ENCODE measurements at regions of chr20 and their contacts with region 1.

Region 1: GRCh38 chr20:19205977-19206396 is 6.5 kb upstream of the SLC24A3 start:
- DNase-seq: peak in 8 of 9 donors; percentile 20 to 71 (median 41)
- ATAC-seq: peak; percentile 67
- H3K4me3 ChIP-seq: no peak overlapping the region
- H3K4me3 Mint-ChIP-seq: no peak overlapping the region
- H3K27ac ChIP-seq: no peak overlapping the region
- H3K27ac Mint-ChIP-seq: no peak overlapping the region
- H3K4me1 ChIP-seq: no peaks in the 10 kb centered on the region
- H3K4me1 Mint-ChIP-seq: no peaks in the 10 kb centered on the region
- H3K27me3 ChIP-seq: no peaks in the 10 kb centered on the region
- H3K27me3 Mint-ChIP-seq: peaks cover 18 to 70% (median 39%) of the 10 kb centered on the region in 5 donors

Region 2: DNA sequence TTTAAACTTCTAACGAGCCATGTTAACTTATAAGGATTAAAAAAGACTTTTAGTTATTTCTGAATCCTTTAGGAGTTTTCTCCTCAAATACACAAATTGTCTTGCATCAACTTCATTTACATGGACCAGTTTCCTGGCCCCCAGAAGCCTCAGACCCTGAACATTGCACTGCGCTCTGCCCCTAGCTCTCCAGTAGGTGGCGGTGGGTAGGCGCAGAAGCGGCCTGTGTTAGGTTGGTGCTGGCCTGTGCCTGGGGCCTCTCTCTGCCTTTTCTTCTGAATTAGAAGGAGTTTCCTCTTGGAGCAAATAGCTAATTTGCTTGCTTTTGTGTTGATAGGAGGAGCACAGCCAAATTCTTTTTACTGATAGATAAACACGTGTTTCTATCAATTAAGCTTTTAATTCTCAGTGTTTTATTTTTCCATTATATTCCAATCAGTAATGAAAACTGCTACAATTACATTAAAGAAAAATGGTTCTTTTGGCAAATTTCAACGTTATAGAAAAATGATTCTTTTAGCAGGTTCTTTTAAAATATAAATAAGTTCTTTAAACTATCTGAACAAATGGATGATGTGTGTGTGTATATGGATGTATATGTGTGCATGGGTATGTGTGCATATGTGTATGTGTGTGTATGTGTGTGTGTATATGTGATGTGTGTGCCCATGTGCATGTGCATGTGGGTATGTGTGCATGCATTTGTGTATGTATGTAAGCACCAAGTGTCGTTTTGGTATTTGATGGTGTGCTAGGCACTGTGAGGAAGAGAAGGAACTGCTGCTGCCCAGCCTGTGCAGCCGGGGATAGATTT is 573.6 kb before region 1 on chr20:
- CTCF ChIA-PET with region 1: interaction called, 3 read pairs
- POLR2A ChIA-PET with region 1: no interaction called
- intact Hi-C with region 1: loop called (anchors 5 kb)
- DNase-seq: peak in 8 of 9 donors; percentile 1 to 52 (median 32)
- ATAC-seq: peak; percentile 80
- H3K4me3 ChIP-seq: no peak overlapping the region
- H3K4me3 Mint-ChIP-seq: no peak overlapping the region
- H3K27ac ChIP-seq: no peak overlapping the region
- H3K27ac Mint-ChIP-seq: no peak overlapping the region
- H3K4me1 ChIP-seq: no peaks in the 10 kb centered on the region
- H3K4me1 Mint-ChIP-seq: peaks cover 0 to 4% (median 0%) of the 10 kb centered on the region in 7 donors
- H3K27me3 ChIP-seq: no peaks in the 10 kb centered on the region
- H3K27me3 Mint-ChIP-seq: no peaks in the 10 kb centered on the region

Region 3: GRCh38 chr20:19223652-19224051 is 17.7 kb after region 1 on chr20:
- CTCF ChIA-PET with region 1: no interaction called
- POLR2A ChIA-PET with region 1: no interaction called
- intact Hi-C with region 1: no loop called
- DNase-seq: no peak
- ATAC-seq: peak; percentile 70
- H3K4me3 ChIP-seq: no peak overlapping the region
- H3K4me3 Mint-ChIP-seq: no peak overlapping the region
- H3K27ac ChIP-seq: no peak overlapping the region
- H3K27ac Mint-ChIP-seq: no peak overlapping the region
- H3K4me1 ChIP-seq: no peaks in the 10 kb centered on the region
- H3K4me1 Mint-ChIP-seq: peaks cover 0 to 2% (median 0%) of the 10 kb centered on the region in 7 donors
- H3K27me3 ChIP-seq: no peaks in the 10 kb centered on the region
- H3K27me3 Mint-ChIP-seq: peaks cover 0 to 11% (median 4%) of the 10 kb centered on the region in 5 donors

Region 4: GRCh38 chr20:19583532-19584175 is 377.7 kb after region 1 on chr20:
- CTCF ChIA-PET with region 1: interaction called, 6 read pairs
- POLR2A ChIA-PET with region 1: no interaction called
- intact Hi-C with region 1: loop called in 1 of 2 experiments (anchors 2 kb)
- DNase-seq: peak in 6 of 9 donors; percentile 6 to 47 (median 14)
- ATAC-seq: peak; percentile 78
- H3K4me3 ChIP-seq: no peak overlapping the region
- H3K4me3 Mint-ChIP-seq: no peak overlapping the region
- H3K27ac ChIP-seq: no peak overlapping the region
- H3K27ac Mint-ChIP-seq: no peak overlapping the region
- H3K4me1 ChIP-seq: no peaks in the 10 kb centered on the region
- H3K4me1 Mint-ChIP-seq: no peaks in the 10 kb centered on the region
- H3K27me3 ChIP-seq: no peaks in the 10 kb centered on the region
- H3K27me3 Mint-ChIP-seq: peaks cover 0 to 8% (median 0%) of the 10 kb centered on the region in 5 donors

Region 5: DNA sequence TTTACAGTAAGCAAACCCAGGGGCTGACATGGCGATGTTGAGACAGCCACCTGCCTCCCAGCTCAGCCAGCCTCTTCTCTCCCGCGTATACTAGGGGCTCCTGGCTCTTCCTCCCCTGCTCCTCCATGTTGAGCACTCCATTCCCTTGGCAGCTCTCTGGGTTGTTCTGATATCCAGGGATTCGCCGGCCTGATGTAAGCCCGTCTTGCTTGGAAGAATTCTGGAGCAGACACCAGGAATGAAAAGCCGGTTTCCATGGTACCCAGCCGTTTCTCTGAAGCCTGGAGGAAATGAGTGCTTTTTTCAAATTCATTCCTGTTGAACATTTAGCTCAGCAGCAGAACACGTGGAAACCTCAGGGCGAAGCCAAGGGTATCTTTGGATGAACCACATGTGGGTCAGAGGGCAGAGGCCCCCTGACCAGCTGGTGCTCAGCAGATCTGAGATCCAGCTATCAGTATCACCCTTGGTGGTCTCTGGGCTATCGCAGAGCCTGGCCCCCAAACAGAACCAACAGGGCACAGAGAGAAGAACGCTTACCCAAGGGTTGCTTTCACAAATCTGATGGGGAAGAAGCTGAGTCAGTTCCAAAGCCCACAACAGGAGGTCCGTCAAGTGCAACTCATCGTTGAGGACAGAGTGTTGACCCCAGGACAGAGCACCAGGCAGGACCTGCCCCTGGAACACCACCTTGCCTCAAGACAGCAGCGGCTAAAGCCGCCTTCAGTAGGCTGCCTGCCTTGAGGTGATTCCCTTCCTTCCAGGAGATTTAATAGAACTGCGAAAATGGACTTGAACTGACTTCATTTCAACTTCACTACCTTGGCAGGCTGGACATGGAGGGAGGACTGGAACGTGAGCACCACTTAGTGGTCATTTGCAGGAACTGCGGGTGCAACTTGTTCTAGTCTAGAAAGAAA is 456.0 kb after region 1 on chr20:
- CTCF ChIA-PET with region 1: interaction called, 3 read pairs
- POLR2A ChIA-PET with region 1: no interaction called
- intact Hi-C with region 1: loop called in 1 of 2 experiments (anchors 1 kb)
- DNase-seq: peak in 7 of 9 donors; percentile 2 to 38 (median 29)
- ATAC-seq: peak; percentile 71
- H3K4me3 ChIP-seq: no peak overlapping the region
- H3K4me3 Mint-ChIP-seq: no peak overlapping the region
- H3K27ac ChIP-seq: no peak overlapping the region
- H3K27ac Mint-ChIP-seq: no peak overlapping the region
- H3K4me1 ChIP-seq: no peaks in the 10 kb centered on the region
- H3K4me1 Mint-ChIP-seq: peaks cover 0 to 5% (median 0%) of the 10 kb centered on the region in 7 donors
- H3K27me3 ChIP-seq: no peaks in the 10 kb centered on the region
- H3K27me3 Mint-ChIP-seq: peaks cover 5 to 52% (median 25%) of the 10 kb centered on the region in 5 donors